ENCODE measurements at regions of chr20 and their contacts with region 1.

Region 1: GRCh38 chr20:10536531-10536930 is 101.4 kb downstream of the SLX4IP start:
- DNase-seq: no peak
- H3K4me3 ChIP-seq: no peak overlapping the region
- H3K27ac ChIP-seq: no peak overlapping the region
- H3K4me1 ChIP-seq: peaks cover 28% of the 10 kb centered on the region
- H3K27me3 ChIP-seq: no peaks in the 10 kb centered on the region
- CTCF ChIP-seq: peak; percentile 51 to 76

Region 2: DNA sequence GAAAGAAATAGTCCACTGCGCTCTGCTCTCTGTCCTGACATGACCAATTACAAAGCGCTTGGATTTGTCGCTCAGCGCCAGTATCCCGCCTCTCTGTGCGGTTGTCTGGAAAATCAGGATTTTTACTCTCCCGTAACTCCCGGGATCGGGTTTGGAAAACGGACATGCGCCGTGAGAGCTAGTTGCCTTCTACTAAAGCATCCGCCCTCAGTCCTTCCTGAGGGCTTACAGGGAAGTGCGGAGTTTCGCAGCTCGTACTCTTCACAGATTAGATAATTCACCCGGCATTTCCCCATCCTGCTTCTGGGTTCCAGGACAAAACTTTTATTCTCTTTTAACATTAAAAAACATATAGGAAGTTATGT is 102.1 kb before region 1 on chr20:
- CTCF ChIA-PET with region 1: interaction called, 3 read pairs
- dilution Hi-C with region 1: no loop called
- in situ Hi-C with region 1: no loop called
- intact Hi-C with region 1: loop called (anchors 1 kb)
- DNase-seq: peak; percentile 99
- H3K4me3 ChIP-seq: peak overlapping the region; percentile 76 to 92 (median 87)
- H3K27ac ChIP-seq: peak overlapping the region; percentile 89
- H3K4me1 ChIP-seq: peaks cover 21% of the 10 kb centered on the region
- H3K27me3 ChIP-seq: no peaks in the 10 kb centered on the region
- CTCF ChIP-seq: no peak

Region 3: GRCh38 chr20:10469599-10469998 is 66.9 kb before region 1 on chr20:
- CTCF ChIA-PET with region 1: no interaction called
- dilution Hi-C with region 1: no loop called
- in situ Hi-C with region 1: loop called (anchors 10 kb)
- intact Hi-C with region 1: loop called (anchors 1 kb)
- DNase-seq: peak; percentile 73
- H3K4me3 ChIP-seq: no peak overlapping the region
- H3K27ac ChIP-seq: peak overlapping the region; percentile 37
- H3K4me1 ChIP-seq: peaks cover 20% of the 10 kb centered on the region
- H3K27me3 ChIP-seq: no peaks in the 10 kb centered on the region
- CTCF ChIP-seq: peak; percentile 73 to 75

Region 4: DNA sequence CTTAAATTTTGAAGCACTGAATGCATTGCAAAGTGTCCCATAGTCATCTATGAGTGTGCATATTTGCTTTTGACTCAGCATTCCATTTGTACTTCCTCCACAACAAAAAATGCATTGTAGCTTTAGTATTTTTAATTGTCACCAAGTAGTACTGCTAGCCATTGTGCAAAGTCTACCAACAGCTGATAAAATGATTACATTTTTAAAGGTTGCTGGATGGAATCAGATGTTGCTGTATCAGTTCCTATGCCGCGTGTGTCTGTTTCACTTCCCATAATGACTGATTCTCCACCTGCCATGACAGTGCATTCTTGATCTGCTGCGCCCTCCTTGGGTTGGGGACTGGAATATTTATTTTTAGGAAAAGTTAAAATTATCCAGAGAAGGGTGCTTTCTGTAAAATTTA is 60.2 kb before region 1 on chr20:
- CTCF ChIA-PET with region 1: no interaction called
- dilution Hi-C with region 1: no loop called
- in situ Hi-C with region 1: loop called (anchors 10 kb)
- intact Hi-C with region 1: no loop called
- DNase-seq: no peak
- H3K4me3 ChIP-seq: no peak overlapping the region
- H3K27ac ChIP-seq: no peak overlapping the region
- H3K4me1 ChIP-seq: no peaks in the 10 kb centered on the region
- H3K27me3 ChIP-seq: no peaks in the 10 kb centered on the region
- CTCF ChIP-seq: no peak